ENCODE measurements at regions of chr2 and their contacts with region 1.

Region 1: DNA sequence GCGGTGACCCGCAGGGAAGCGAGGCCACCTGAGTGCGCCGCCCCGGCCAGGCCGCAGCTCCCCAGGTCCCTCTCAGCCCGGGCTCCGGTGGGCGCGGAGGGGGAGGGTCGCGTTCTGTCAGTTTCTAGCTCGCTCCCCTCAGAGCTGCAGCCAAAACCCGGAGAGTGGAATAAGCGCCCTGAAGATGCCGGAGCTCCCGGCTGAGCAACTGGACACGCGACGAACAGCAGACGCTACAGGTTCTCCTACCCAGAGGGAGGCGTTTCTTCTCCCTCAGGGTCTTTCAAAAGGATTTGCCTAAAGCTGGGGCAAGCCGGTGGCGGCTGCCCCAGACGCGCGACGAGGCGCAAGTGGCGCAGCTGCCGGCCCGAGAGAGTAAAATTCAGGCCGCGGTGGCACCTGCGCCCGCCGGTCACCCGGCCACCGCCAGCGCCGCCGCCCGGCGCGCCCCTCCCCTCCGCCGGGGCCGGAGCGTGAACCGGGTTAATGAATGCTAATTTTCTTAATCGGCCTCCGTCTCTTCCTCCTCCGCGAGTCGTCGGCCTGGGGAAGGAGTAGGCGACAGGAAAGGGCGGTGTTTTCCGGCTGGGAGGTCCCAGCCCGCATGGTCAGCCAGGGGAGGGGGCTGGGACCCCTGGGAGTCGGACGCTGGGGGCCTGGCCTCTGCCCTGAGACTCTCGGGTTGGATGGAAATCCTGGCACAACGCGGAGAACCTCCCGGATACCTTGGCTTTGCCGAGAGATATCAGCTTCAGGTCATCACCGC is 845 bp upstream of the CDC42EP3 start:
- DNase-seq: peak; percentile 48 to 74 (median 62)
- ATAC-seq: peak; percentile 68
- H3K4me3 ChIP-seq: peak overlapping the region; percentile 86
- H3K4me3 Mint-ChIP-seq: peak overlapping the region; percentile 78 to 96 (median 89)
- H3K27ac ChIP-seq: peak overlapping the region; percentile 72
- H3K27ac Mint-ChIP-seq: peak overlapping the region in 8 of 9 donors; percentile 65 to 91 (median 84)
- H3K4me1 ChIP-seq: peaks cover 18 to 25% of the 10 kb centered on the region in 2 donors
- H3K4me1 Mint-ChIP-seq: peaks cover 27 to 42% (median 41%) of the 10 kb centered on the region in 7 donors
- H3K27me3 ChIP-seq: no peaks in the 10 kb centered on the region
- H3K27me3 Mint-ChIP-seq: peaks cover 0 to 2% (median 0%) of the 10 kb centered on the region in 5 donors

Region 2: DNA sequence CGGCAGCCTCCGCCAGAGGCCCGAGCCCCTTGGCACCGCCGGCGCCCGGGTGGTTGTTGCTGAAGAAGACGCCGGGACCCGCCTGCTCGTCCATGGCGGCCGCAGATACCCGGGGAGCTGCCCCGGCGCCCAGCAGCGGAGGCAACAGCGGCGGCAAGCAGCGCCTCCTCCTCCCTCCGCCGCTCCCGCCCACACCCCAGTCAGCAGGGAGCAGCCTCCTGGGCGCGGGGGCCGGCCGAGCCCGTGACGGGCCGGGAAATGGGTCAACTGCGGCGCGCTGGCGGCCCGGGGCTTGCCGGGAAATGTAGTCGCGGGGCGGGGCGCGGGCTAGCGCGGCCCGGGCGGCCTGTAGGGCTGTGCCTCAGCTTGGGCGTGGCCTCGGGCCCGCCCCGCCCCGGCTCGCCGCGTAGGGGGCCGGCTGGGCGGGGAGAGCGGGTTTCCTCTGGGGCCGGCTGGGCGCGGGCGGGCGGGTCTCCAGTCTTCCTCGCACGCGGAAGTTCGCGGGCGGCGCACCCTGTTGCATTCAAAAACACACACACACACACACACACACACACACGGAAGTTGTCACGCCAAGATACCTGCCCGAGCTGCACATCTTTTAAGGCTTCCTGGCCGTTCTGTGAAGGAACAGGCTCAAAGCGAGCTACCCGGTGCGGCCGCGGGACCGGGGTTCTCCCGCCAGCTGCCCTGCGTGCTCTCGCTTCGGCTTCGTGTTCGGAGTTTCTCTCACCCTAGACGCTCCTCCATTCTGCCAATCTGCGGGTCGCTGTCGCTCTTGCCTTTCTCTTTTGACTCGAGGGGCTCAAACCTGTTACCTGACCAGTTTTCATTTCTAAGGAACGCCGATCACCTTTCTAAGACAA is 705.7 kb before region 1 on chr2 and contains the start of gene STRN:
- CTCF ChIA-PET with region 1: no interaction called
- POLR2A ChIA-PET with region 1: no interaction called
- intact Hi-C with region 1: loop called (anchors 5 to 10 kb)
- DNase-seq: peak; percentile 96 to 99 (median 99)
- ATAC-seq: peak; percentile 97
- H3K4me3 ChIP-seq: peak within 1 kb of the TSS; percentile 89
- H3K4me3 Mint-ChIP-seq: peak within 1 kb of the TSS; percentile 92 to 99 (median 98)
- H3K27ac ChIP-seq: peak within 1 kb of the TSS; percentile 90
- H3K27ac Mint-ChIP-seq: peak within 1 kb of the TSS; percentile 96 to 100 (median 98)
- H3K4me1 ChIP-seq: peaks cover 8 to 19% of the 10 kb centered on the region in 2 donors
- H3K4me1 Mint-ChIP-seq: peaks cover 35 to 57% (median 48%) of the 10 kb centered on the region in 7 donors
- H3K27me3 ChIP-seq: no peaks in the 10 kb centered on the region
- H3K27me3 Mint-ChIP-seq: no peaks in the 10 kb centered on the region
- total RNA-seq, gene STRN: 23.0 to 35.0 (median 30.9) TPM

Region 3: DNA sequence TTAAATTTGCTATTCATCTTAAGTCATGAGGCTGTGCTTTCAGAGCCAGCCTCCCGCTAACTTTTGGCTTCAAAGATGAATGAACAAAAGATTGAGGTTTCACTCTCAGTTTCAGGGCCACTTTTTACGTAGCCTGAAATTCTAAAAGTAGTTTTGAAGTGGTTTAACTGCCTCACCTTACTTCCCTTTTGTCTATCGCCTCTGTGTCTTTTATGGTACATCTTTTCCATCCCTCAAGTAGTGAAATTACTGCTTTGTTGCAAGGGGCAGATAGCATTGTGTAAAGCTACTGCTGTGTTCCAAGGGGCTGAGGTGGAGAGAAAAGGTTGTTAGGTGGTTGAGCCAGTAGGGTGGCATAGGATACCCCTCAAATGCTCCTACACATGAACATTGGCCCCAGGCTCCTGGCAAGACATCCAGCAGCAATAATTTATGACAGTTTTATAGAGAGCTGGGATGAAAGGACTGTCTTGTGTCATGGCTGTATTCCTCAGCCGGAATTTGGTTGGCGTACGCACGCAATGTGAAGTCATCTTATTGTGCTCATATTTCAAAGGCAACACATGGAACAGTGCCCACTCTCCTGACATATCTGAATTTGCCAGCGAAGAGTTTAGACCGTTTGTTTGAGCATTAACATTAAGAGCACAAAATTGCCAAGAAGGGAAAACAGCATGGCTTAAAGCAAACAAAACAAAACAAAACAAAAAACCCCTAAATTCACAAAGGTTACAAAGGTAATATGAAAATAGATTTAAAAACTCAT is 295.7 kb before region 1 on chr2:
- CTCF ChIA-PET with region 1: no interaction called
- POLR2A ChIA-PET with region 1: no interaction called
- intact Hi-C with region 1: loop called in 1 of 2 experiments (anchors 5 kb)
- DNase-seq: peak in 8 of 9 donors; percentile 27 to 69 (median 56)
- ATAC-seq: peak; percentile 86
- H3K4me3 ChIP-seq: no peak overlapping the region
- H3K4me3 Mint-ChIP-seq: peak overlapping the region in 9 of 10 donors; percentile 33 to 80 (median 63)
- H3K27ac ChIP-seq: no peak overlapping the region
- H3K27ac Mint-ChIP-seq: peak overlapping the region in 4 of 9 donors; percentile 16 to 65 (median 35)
- H3K4me1 ChIP-seq: peaks cover 13 to 17% of the 10 kb centered on the region in 2 donors
- H3K4me1 Mint-ChIP-seq: peaks cover 11 to 30% (median 17%) of the 10 kb centered on the region in 7 donors
- H3K27me3 ChIP-seq: peaks cover 0 to 6% of the 10 kb centered on the region in 2 donors
- H3K27me3 Mint-ChIP-seq: peaks cover 25 to 66% (median 53%) of the 10 kb centered on the region in 5 donors

Region 4: GRCh38 chr2:37459095-37459981 is 212.9 kb before region 1 on chr2:
- CTCF ChIA-PET with region 1: no interaction called
- POLR2A ChIA-PET with region 1: no interaction called
- intact Hi-C with region 1: loop called in 1 of 2 experiments (anchors 5 kb)
- DNase-seq: no peak
- ATAC-seq: no peak
- H3K4me3 ChIP-seq: no peak overlapping the region
- H3K4me3 Mint-ChIP-seq: peak overlapping the region in 1 of 10 donors; percentile 3
- H3K27ac ChIP-seq: no peak overlapping the region
- H3K27ac Mint-ChIP-seq: peak overlapping the region in 3 of 9 donors; percentile 20 to 38 (median 32)
- H3K4me1 ChIP-seq: peaks cover 27 to 45% of the 10 kb centered on the region in 2 donors
- H3K4me1 Mint-ChIP-seq: peaks cover 9 to 64% (median 47%) of the 10 kb centered on the region in 7 donors
- H3K27me3 ChIP-seq: no peaks in the 10 kb centered on the region
- H3K27me3 Mint-ChIP-seq: peaks cover 0 to 12% (median 0%) of the 10 kb centered on the region in 5 donors

Region 5: GRCh38 chr2:37623971-37624900 is 48.1 kb before region 1 on chr2:
- CTCF ChIA-PET with region 1: no interaction called
- POLR2A ChIA-PET with region 1: interaction called, 5 read pairs
- intact Hi-C with region 1: loop called in 1 of 2 experiments (anchors 2 kb)
- DNase-seq: no peak
- ATAC-seq: peak; percentile 70
- H3K4me3 ChIP-seq: no peak overlapping the region
- H3K4me3 Mint-ChIP-seq: peak overlapping the region in 9 of 10 donors; percentile 7 to 66 (median 51)
- H3K27ac ChIP-seq: no peak overlapping the region
- H3K27ac Mint-ChIP-seq: peak overlapping the region; percentile 38 to 92 (median 83)
- H3K4me1 ChIP-seq: peaks cover 30 to 56% of the 10 kb centered on the region in 2 donors
- H3K4me1 Mint-ChIP-seq: peaks cover 40 to 63% (median 45%) of the 10 kb centered on the region in 7 donors
- H3K27me3 ChIP-seq: no peaks in the 10 kb centered on the region
- H3K27me3 Mint-ChIP-seq: peaks cover 0 to 3% (median 0%) of the 10 kb centered on the region in 5 donors

Region 6: GRCh38 chr2:37683921-37684780 is 11.9 kb after region 1 on chr2:
- CTCF ChIA-PET with region 1: no interaction called
- POLR2A ChIA-PET with region 1: interaction called, 6 read pairs
- intact Hi-C with region 1: loop called (anchors 1 kb)
- DNase-seq: peak in 7 of 9 donors; percentile 29 to 64 (median 55)
- ATAC-seq: peak; percentile 97
- H3K4me3 ChIP-seq: no peak overlapping the region
- H3K4me3 Mint-ChIP-seq: peak overlapping the region in 9 of 10 donors; percentile 19 to 72 (median 67)
- H3K27ac ChIP-seq: peak overlapping the region; percentile 20
- H3K27ac Mint-ChIP-seq: peak overlapping the region; percentile 55 to 95 (median 82)
- H3K4me1 ChIP-seq: peaks cover 17 to 26% of the 10 kb centered on the region in 2 donors
- H3K4me1 Mint-ChIP-seq: peaks cover 16 to 41% (median 28%) of the 10 kb centered on the region in 7 donors
- H3K27me3 ChIP-seq: no peaks in the 10 kb centered on the region
- H3K27me3 Mint-ChIP-seq: no peaks in the 10 kb centered on the region